Right ventricle myocardium inferior (tissue), 1 donor: ENCODE measurements at regions of chr11 and their contacts with region 1.

Region 1: DNA sequence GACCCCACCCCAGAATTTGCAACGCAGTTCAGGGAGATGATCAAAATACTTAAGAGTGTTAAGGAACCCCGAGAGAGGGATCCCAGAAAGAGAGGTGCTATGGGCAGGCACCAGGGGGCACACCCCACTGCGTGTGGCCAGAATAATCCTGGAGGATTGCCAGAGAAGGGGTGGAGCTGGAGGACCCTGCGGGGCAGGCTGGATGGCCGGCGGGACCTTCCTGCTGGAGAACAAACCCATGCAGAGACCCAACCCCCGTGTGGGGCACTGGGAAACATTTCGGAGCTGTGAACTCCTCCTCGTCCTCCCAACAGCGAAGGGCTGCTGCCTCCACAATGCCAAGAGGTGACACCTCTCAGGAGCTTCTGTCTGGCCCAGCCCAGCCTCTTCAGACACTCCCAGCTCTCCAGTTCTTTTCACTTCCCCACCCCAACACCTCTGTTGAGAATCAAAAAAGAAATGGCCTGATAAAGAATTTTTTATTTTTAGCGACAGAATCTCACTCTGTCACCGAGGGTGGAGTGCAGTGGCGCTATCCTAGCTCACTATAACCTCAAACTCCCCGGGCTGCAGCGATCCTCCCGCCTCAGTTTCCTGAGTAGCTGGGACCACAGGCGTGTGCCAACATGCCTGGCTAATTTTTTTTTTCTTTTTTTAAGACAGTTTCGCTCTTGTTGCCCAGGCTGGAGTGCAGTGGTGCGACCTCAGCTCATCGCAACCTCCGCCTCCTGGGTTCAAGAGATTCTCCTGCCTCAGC is 25.6 kb downstream of the RHOD start:
- DNase-seq: no peak
- ATAC-seq: peak; percentile 31

Region 2: DNA sequence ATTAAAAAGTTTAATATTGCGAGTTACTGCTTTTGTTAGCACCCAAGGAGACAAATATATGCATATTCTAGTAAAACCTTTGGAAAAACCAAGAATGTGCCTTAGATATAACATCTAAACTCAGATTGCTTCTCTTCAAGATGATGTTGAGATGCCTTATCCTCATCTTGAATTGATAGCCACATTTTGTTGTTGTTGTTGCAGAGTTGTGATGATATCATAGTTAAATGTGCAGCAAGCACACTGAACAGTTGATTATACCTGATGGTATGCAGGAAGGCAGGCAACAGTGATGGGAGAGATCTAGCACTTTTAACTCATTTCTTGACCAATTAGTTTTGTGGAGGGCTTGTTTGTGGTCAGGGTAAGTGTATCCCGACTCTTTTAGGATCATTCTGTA is 84.9 kb after region 1 on chr11:
- intact Hi-C with region 1: loop called (anchors 1 kb)
- DNase-seq: no peak
- ATAC-seq: no peak

Region 3: GRCh38 chr11:67239783-67240575 is 157.8 kb after region 1 on chr11:
- intact Hi-C with region 1: loop called (anchors 2 kb)
- DNase-seq: peak; percentile 96
- ATAC-seq: peak; percentile 98

Region 4: DNA sequence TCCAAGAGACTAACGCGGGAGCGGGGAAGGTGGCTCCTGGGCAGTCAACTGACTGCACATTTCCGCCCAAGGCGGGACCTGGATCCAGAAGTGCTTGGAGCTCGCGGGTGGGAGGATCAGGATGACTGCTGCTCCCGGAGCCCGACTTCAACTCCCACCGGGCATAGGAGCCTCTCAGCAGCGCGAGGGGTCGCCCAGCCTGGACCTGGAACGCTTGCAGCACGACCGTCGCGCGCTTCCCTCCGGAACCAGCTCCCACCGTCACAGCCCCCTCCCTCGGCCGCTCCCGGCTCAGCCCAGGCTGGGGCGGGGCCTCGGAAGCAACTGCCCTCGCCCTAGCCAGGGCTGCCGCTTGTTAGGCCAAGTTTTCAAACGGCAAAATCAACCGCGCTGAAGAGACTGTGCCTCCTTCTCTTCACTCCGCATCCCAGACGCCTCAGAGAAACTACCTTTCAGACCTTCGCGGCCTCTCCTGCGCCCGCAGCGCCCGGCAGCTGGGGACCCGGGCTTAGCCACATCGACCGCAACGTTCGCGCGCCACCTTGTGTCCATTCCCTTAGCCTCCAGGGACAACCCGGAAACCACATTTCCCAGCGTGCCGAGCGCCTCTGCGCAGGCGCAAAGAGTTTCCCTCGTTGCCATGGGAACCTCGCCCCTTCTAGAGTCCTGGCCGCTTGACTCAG is 235.1 kb after region 1 on chr11:
- intact Hi-C with region 1: loop called (anchors 5 kb)
- DNase-seq: peak; percentile 97
- ATAC-seq: peak; percentile 94

Region 5: GRCh38 chr11:67356864-67357561 is 274.8 kb after region 1 on chr11:
- intact Hi-C with region 1: no loop called
- DNase-seq: no peak
- ATAC-seq: no peak